ENCODE measurements at regions of chr3 and their contacts with region 1.

Region 1: GRCh38 chr3:16048435-16049318 is 125.8 kb upstream of the GALNT15 start:
- DNase-seq: peak; percentile 72
- ATAC-seq: peak; percentile 95
- H3K4me3 ChIP-seq: no peak overlapping the region; a peak in 1 of 6 replicates
- H3K27ac ChIP-seq: no peak overlapping the region
- H3K4me1 ChIP-seq: peaks cover 39% of the 10 kb centered on the region
- H3K27me3 ChIP-seq: no peaks in the 10 kb centered on the region; a peak in 1 of 5 replicates
- CTCF ChIP-seq: peak; percentile 89
- EP300 ChIP-seq: no peak
- POLR2A ChIP-seq: no peak
- RAD21 ChIP-seq: peak; percentile 92

Region 2: GRCh38 chr3:15629860-15630597 is 418.6 kb before region 1 on chr3:
- CTCF ChIA-PET with region 1: no interaction called
- POLR2A ChIA-PET with region 1: no interaction called
- in situ Hi-C with region 1: no loop called
- intact Hi-C with region 1: loop called (anchors 1 kb)
- DNase-seq: peak; percentile 62
- ATAC-seq: peak; percentile 98
- H3K4me3 ChIP-seq: no peak overlapping the region
- H3K27ac ChIP-seq: no peak overlapping the region
- H3K4me1 ChIP-seq: peaks cover 13% of the 10 kb centered on the region
- H3K27me3 ChIP-seq: no peaks in the 10 kb centered on the region
- CTCF ChIP-seq: peak; percentile 77
- EP300 ChIP-seq: no peak
- POLR2A ChIP-seq: no peak
- RAD21 ChIP-seq: peak; percentile 55

Region 3: GRCh38 chr3:15815696-15816095 is 233.0 kb before region 1 on chr3:
- CTCF ChIA-PET with region 1: no interaction called
- POLR2A ChIA-PET with region 1: no interaction called
- in situ Hi-C with region 1: no loop called
- intact Hi-C with region 1: loop called (anchors 5 kb)
- DNase-seq: peak; percentile 30
- ATAC-seq: no peak
- H3K4me3 ChIP-seq: no peak overlapping the region
- H3K27ac ChIP-seq: no peak overlapping the region
- H3K4me1 ChIP-seq: no peaks in the 10 kb centered on the region
- H3K27me3 ChIP-seq: no peaks in the 10 kb centered on the region
- CTCF ChIP-seq: peak; percentile 31; the same call in 1 of the 2 replicates
- EP300 ChIP-seq: no peak
- POLR2A ChIP-seq: no peak
- RAD21 ChIP-seq: no peak

Region 4: DNA sequence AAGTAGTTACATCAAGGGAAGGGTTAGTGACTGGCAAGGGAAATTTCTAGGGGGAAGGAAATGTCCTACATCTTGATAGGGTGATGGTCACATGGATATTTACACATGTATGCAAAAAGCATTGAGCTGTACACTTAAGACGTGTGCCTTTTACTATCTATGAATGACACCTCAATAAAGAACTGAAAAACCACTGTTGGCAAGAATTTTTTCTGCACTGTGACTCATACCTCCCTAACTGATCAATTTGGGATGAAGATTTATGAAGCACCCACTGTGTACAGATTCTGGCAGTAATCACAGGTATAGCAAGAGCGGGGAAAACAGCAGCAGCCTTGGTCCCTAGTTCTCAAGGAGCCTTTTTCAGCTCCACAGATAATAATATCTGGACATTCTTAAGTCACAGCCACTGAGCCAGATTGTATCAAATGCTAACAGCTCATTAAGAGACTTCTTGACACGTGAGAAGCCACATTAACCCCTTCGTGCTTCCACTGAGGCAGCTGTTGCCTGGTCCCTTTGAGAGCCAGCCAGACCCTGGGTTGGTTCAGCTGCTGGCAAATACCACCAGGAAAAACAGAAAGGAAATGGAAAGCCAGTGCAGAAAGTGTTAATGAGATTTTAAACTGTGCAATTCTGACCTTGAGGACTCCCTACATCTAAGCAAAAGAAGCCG is 93.8 kb after region 1 on chr3:
- CTCF ChIA-PET with region 1: interaction called, 10 read pairs
- POLR2A ChIA-PET with region 1: no interaction called
- in situ Hi-C with region 1: no loop called
- intact Hi-C with region 1: loop called (anchors 1 kb)
- DNase-seq: no peak
- ATAC-seq: no peak
- H3K4me3 ChIP-seq: no peak overlapping the region
- H3K27ac ChIP-seq: no peak overlapping the region
- H3K4me1 ChIP-seq: no peaks in the 10 kb centered on the region
- H3K27me3 ChIP-seq: peaks cover 0 to 12% of the 10 kb centered on the region in 2 experiments; a peak in 3 of 5 replicates
- CTCF ChIP-seq: no peak
- EP300 ChIP-seq: no peak
- POLR2A ChIP-seq: no peak
- RAD21 ChIP-seq: no peak

Region 5: DNA sequence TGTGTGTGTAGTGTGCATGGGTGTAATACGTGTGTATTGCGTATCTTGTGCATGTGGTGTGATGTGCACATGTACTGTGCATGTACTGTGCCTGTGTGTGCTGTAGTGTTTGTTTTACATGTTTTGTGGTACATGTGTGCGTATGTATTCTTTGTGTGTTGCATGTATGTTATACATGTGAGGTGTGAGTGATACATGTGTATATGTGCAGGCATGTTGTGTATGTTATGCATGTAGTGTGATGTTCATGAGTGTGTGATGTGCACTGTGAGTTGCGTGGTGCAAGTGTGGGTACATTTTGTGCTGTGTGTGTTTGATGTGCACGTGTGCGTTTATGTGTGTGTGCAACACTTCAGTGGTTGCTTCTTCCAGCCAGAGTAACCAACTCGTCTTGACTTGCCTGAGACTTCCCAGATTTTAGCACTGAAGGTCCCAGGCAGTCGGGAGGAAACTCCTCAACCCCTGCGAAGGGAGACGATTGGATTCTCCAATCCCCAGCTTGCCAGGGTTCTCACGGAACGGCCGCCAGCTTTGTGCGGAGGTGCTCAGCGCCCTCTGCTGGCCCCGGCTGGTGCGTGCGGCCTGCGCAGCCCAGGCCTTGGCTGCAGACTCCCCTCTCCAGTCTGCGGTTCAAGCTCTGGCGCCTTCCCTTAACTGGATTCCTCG is 129.4 kb after region 1 on chr3:
- CTCF ChIA-PET with region 1: interaction called, 58 read pairs
- POLR2A ChIA-PET with region 1: interaction called, 3 read pairs
- in situ Hi-C with region 1: loop called (anchors 5 kb)
- intact Hi-C with region 1: loop called (anchors 1 kb)
- DNase-seq: peak; percentile 42
- ATAC-seq: peak; percentile 90
- H3K4me3 ChIP-seq: no peak overlapping the region
- H3K27ac ChIP-seq: no peak overlapping the region
- H3K4me1 ChIP-seq: peaks cover 19% of the 10 kb centered on the region
- H3K27me3 ChIP-seq: peaks cover 3 to 56% of the 10 kb centered on the region in 2 experiments; a peak in 3 of 5 replicates
- CTCF ChIP-seq: peak; percentile 98
- EP300 ChIP-seq: no peak
- POLR2A ChIP-seq: no peak
- RAD21 ChIP-seq: peak; percentile 96

Region 6: DNA sequence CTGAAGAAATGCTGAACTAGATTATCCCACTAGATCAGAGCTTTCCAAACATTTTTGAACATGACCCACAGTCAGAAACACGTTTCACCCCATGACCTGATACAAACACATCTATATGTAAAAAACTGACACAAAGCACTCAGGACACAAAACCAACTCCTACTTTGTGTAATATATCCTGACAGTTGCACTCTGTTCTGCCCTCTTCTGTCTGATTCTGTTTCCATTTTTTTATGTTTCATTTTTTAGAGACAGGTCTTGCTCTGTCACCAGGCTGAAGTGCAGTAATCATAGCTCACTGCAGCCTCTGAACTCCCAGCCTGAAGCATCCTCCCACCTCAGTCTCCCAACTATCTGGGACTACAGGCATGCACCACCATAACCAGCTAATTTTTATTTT is 480.6 kb after region 1 on chr3:
- CTCF ChIA-PET with region 1: no interaction called
- POLR2A ChIA-PET with region 1: no interaction called
- in situ Hi-C with region 1: loop called (anchors 25 kb)
- intact Hi-C with region 1: no loop called
- DNase-seq: no peak
- ATAC-seq: no peak
- H3K4me3 ChIP-seq: no peak overlapping the region
- H3K27ac ChIP-seq: no peak overlapping the region
- H3K4me1 ChIP-seq: no peaks in the 10 kb centered on the region
- H3K27me3 ChIP-seq: peaks cover 2 to 19% of the 10 kb centered on the region in 2 experiments; a peak in 2 of 5 replicates
- CTCF ChIP-seq: no peak
- EP300 ChIP-seq: no peak
- POLR2A ChIP-seq: no peak
- RAD21 ChIP-seq: no peak

Region 7: GRCh38 chr3:16550676-16551341 is 502.1 kb after region 1 on chr3:
- CTCF ChIA-PET with region 1: no interaction called
- POLR2A ChIA-PET with region 1: no interaction called
- in situ Hi-C with region 1: loop called (anchors 25 kb)
- intact Hi-C with region 1: loop called (anchors 2 kb)
- DNase-seq: peak; percentile 76
- ATAC-seq: peak; percentile 100
- H3K4me3 ChIP-seq: no peak overlapping the region
- H3K27ac ChIP-seq: no peak overlapping the region
- H3K4me1 ChIP-seq: no peaks in the 10 kb centered on the region
- H3K27me3 ChIP-seq: peaks cover 0 to 21% of the 10 kb centered on the region in 2 experiments; a peak in 1 of 5 replicates
- CTCF ChIP-seq: peak; percentile 91
- EP300 ChIP-seq: no peak
- POLR2A ChIP-seq: no peak
- RAD21 ChIP-seq: peak; percentile 86; the same call in 1 of the 2 replicates